ENCODE measurements at regions of chr6 and their contacts with region 1.

Region 1: GRCh38 chr6:156949376-156949775 is 172.2 kb downstream of the ARID1B start:
- DNase-seq: no peak
- ATAC-seq: no peak
- H3K4me3 Mint-ChIP-seq: no peak overlapping the region
- H3K27ac Mint-ChIP-seq: no peak overlapping the region
- H3K4me1 Mint-ChIP-seq: peaks cover 65% of the 10 kb centered on the region
- H3K27me3 Mint-ChIP-seq: no peaks in the 10 kb centered on the region
- CTCF ChIP-seq: no peak

Region 2: GRCh38 chr6:156901309-156902019 is 47.9 kb before region 1 on chr6:
- CTCF ChIA-PET with region 1: no interaction called
- POLR2A ChIA-PET with region 1: no interaction called
- intact Hi-C with region 1: loop called (anchors 5 kb)
- DNase-seq: no peak
- ATAC-seq: no peak
- H3K4me3 Mint-ChIP-seq: no peak overlapping the region
- H3K27ac Mint-ChIP-seq: no peak overlapping the region
- H3K4me1 Mint-ChIP-seq: peaks cover 37% of the 10 kb centered on the region
- H3K27me3 Mint-ChIP-seq: no peaks in the 10 kb centered on the region
- CTCF ChIP-seq: no peak

Region 3: GRCh38 chr6:156933201-156934068 is 15.9 kb before region 1 on chr6:
- CTCF ChIA-PET with region 1: no interaction called
- POLR2A ChIA-PET with region 1: no interaction called
- intact Hi-C with region 1: loop called (anchors 1 kb)
- DNase-seq: no peak
- ATAC-seq: no peak
- H3K4me3 Mint-ChIP-seq: no peak overlapping the region
- H3K27ac Mint-ChIP-seq: no peak overlapping the region
- H3K4me1 Mint-ChIP-seq: peaks cover 66% of the 10 kb centered on the region
- H3K27me3 Mint-ChIP-seq: no peaks in the 10 kb centered on the region
- CTCF ChIP-seq: no peak

Region 4: DNA sequence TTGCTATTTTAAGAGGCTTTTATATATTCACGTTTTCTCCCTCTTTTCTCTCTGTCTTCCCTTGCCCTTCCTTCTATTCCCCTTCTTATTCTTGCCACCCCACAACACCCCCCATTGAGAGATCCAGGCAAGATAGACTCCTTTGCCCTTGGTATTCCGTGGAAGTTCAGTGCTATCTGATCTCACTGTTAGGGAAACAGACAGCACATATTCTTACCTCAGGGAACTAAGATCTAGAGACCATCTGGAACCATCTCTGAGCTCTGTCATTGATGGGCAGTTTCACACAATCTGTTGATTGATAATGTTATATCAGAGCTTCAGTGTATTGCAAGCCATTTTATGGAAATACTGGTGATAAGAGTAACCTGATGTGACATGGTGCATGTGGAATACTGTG is 56.6 kb after region 1 on chr6:
- CTCF ChIA-PET with region 1: no interaction called
- POLR2A ChIA-PET with region 1: no interaction called
- intact Hi-C with region 1: loop called (anchors 2 kb)
- DNase-seq: no peak
- ATAC-seq: no peak
- H3K4me3 Mint-ChIP-seq: no peak overlapping the region
- H3K27ac Mint-ChIP-seq: no peak overlapping the region
- H3K4me1 Mint-ChIP-seq: peaks cover 76% of the 10 kb centered on the region
- H3K27me3 Mint-ChIP-seq: no peaks in the 10 kb centered on the region
- CTCF ChIP-seq: no peak

Region 5: DNA sequence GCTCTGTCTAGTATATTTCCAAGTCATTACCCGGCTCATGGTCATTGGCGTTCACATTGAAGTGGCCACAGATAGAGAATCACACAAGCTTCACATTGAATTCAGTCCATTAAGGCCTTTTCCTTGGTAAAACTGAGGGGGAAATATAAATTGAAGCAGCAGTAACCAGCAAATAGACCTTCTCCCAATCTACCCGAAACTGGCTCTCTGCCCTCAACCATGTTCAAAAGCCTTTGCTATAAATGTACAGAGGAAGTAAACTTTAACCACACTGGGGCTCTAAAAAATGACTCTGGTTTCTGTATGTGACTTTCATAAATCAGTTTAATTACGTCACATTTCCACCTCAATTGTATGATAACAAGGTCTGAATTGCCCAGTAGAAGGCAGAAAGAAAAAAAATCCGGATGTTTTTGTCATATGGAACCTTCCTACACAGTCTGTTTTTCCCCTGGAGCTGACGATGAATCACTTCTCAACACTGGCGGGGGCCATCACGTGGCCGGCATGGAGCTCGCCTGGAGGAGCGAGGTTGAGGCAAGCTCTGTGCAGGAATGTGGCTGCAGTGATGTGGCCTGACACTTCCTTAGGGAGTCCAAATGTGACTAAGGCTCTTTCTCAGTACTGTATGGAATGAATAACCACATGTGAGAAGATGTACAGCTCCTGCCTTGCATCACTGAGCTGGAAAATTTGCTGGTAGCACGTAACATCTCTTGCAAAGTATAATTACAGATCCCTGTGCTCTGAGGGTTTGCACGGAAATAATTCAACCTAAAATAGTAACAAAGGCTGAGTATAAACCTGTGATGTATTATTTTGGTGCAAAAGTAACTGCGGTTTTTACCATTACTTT is 815.0 kb after region 1 on chr6:
- CTCF ChIA-PET with region 1: no interaction called
- POLR2A ChIA-PET with region 1: no interaction called
- intact Hi-C with region 1: no loop called
- DNase-seq: peak; percentile 73
- ATAC-seq: peak; percentile 43
- H3K4me3 Mint-ChIP-seq: peak overlapping the region; percentile 81
- H3K27ac Mint-ChIP-seq: peak overlapping the region; percentile 99
- H3K4me1 Mint-ChIP-seq: peaks cover 95% of the 10 kb centered on the region
- H3K27me3 Mint-ChIP-seq: no peaks in the 10 kb centered on the region
- CTCF ChIP-seq: no peak

Measured in activated B cell treated with CpG ODN at 0.5 μM for 24 hours (primary cell).